Activated CD8-positive, alpha-beta T cell treated with anti-CD3 and anti-CD28 coated beads for 36 hours (primary cell): ENCODE measurements at regions of chr15 and their contacts with region 1.

Region 1: GRCh38 chr15:92077353-92078085 is 224.0 kb downstream of the SLCO3A1 start:
- DNase-seq: peak; percentile 84
- ATAC-seq: peak; percentile 85
- H3K4me3 Mint-ChIP-seq: no peak overlapping the region
- H3K27ac Mint-ChIP-seq: no peak overlapping the region
- H3K4me1 Mint-ChIP-seq: peaks cover 14% of the 10 kb centered on the region
- H3K27me3 Mint-ChIP-seq: no peaks in the 10 kb centered on the region
- CTCF ChIP-seq: peak; percentile 67

Region 2: GRCh38 chr15:91302588-91303439 is 774.7 kb before region 1 on chr15:
- CTCF ChIA-PET with region 1: interaction called, 37 read pairs
- POLR2A ChIA-PET with region 1: no interaction called
- intact Hi-C with region 1: loop called (anchors 5 kb)
- DNase-seq: no peak
- ATAC-seq: peak; percentile 49
- H3K4me3 Mint-ChIP-seq: no peak overlapping the region
- H3K27ac Mint-ChIP-seq: no peak overlapping the region
- H3K4me1 Mint-ChIP-seq: peaks cover 3% of the 10 kb centered on the region
- H3K27me3 Mint-ChIP-seq: peaks cover 10% of the 10 kb centered on the region
- CTCF ChIP-seq: peak; percentile 87

Region 3: DNA sequence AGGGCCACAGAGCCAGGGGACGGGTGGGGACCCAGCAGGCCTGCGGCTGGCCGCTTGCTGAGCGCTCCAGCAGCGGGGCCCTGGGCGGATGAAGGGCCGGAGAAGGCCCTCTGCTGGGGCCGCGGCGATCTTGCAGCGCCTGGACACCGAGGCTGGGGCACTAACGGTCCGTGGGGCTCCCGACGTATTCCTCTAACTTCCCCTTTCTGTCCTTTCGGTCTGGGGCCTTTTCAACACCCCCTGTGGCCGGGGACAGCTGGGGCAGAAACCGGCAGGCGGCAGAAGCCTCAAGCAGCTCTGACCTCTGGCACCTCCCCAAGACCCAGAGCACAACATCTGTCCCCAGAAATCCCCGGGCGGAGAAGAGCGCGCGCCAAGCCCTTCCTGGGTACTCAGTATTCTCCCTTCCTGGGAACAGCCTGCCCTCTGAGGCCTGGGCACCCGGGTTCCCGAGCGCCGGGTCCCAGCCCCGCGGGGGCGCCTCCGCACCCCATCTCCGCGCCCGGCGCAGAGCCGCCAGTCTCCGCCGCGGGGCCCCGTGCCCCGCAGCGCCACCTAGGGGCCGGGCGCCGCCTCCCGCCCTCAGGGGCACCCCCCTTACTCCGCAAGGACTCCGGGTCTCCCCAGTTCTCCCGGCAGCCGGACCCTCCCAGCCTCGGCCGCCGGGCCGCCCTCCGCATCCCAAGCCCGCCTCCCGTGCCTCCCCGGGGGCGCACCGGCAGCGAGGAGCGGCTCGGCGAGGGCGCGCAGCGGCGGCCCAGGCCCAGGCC is 224.6 kb before region 1 on chr15:
- CTCF ChIA-PET with region 1: interaction called, 41 read pairs
- POLR2A ChIA-PET with region 1: interaction called, 3 read pairs
- intact Hi-C with region 1: loop called (anchors 5 kb)
- DNase-seq: peak; percentile 65
- ATAC-seq: peak; percentile 65
- H3K4me3 Mint-ChIP-seq: peak overlapping the region; percentile 75
- H3K27ac Mint-ChIP-seq: peak overlapping the region; percentile 69
- H3K4me1 Mint-ChIP-seq: peaks cover 57% of the 10 kb centered on the region
- H3K27me3 Mint-ChIP-seq: peaks cover 3% of the 10 kb centered on the region
- CTCF ChIP-seq: peak; percentile 82

Region 4: DNA sequence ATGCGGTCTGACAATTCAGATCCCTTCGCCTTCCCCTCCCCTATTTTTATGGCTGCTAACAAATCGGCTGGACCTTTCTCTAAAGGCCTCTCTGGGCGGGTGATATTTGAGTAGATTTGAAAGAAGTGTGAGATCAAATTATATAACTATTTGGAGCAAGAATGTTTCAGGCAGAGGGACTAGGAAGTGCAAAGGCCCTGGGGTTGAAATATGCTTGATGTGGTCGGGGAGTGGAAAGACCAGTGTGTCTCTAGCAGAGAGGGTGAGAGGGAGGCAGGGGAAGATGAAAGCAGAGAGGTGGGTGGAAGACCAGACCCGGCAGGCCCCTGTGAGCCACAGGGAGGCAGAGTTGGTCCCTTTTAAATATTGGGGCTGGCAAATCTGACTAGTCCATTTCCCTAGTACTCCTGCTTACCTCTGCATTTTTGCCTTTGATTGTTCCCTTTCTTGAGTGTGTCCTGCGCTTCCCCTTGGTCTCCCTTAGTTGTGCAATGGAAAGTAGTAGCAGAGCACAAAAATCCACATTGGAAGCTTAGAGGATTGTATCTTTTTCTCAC is 191.7 kb before region 1 on chr15:
- CTCF ChIA-PET with region 1: interaction called, 11 read pairs
- POLR2A ChIA-PET with region 1: no interaction called
- intact Hi-C with region 1: no loop called
- DNase-seq: peak; percentile 46
- ATAC-seq: peak; percentile 69
- H3K4me3 Mint-ChIP-seq: no peak overlapping the region
- H3K27ac Mint-ChIP-seq: no peak overlapping the region
- H3K4me1 Mint-ChIP-seq: peaks cover 14% of the 10 kb centered on the region
- H3K27me3 Mint-ChIP-seq: no peaks in the 10 kb centered on the region
- CTCF ChIP-seq: no peak

Region 5: GRCh38 chr15:92091155-92091734 is 13.7 kb after region 1 on chr15:
- CTCF ChIA-PET with region 1: interaction called, 19 read pairs
- POLR2A ChIA-PET with region 1: interaction called, 7 read pairs
- intact Hi-C with region 1: no loop called
- DNase-seq: peak; percentile 44
- ATAC-seq: no peak
- H3K4me3 Mint-ChIP-seq: no peak overlapping the region
- H3K27ac Mint-ChIP-seq: no peak overlapping the region
- H3K4me1 Mint-ChIP-seq: peaks cover 19% of the 10 kb centered on the region
- H3K27me3 Mint-ChIP-seq: no peaks in the 10 kb centered on the region
- CTCF ChIP-seq: peak; percentile 67

Region 6: DNA sequence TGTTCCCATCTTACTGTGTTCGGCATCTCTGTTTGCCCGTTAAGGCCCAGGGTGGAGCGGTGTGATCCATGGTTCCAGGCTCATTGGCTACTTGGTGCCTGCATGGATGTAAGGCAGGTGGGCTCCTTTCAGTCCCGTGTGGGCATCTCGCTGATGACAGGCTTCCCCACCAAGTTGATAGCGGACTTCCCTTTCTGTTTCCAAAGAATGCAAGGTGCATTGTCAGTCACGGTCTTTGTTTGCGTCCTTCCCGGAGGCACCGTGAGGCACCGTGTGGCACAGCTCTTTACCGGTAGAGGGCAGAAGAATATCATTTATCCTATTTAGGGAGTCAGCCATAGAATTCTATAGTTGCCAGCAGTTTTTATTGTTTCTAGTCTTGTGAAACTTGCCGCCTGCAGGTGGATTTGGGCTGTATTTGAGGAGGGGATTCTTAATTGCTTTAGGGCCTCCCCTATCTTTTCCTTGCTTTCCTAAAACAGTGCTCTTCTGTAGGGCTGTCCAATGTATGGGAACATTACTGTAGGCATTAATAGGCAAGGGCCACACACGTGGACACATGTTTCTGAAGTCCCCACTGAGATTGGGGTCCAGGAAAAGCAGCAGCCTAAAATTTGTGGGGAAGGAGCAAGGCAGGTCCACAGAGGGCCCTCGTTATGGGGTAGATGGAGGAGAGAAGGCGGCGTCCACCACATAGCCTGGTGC is 20.1 kb after region 1 on chr15:
- CTCF ChIA-PET with region 1: interaction called, 10 read pairs
- POLR2A ChIA-PET with region 1: no interaction called
- intact Hi-C with region 1: no loop called
- DNase-seq: peak; percentile 71
- ATAC-seq: peak; percentile 84
- H3K4me3 Mint-ChIP-seq: no peak overlapping the region
- H3K27ac Mint-ChIP-seq: no peak overlapping the region
- H3K4me1 Mint-ChIP-seq: peaks cover 36% of the 10 kb centered on the region
- H3K27me3 Mint-ChIP-seq: no peaks in the 10 kb centered on the region
- CTCF ChIP-seq: peak; percentile 83

Region 7: GRCh38 chr15:92118162-92118935 is 40.8 kb after region 1 on chr15:
- CTCF ChIA-PET with region 1: no interaction called
- POLR2A ChIA-PET with region 1: no interaction called
- intact Hi-C with region 1: no loop called
- DNase-seq: no peak
- ATAC-seq: no peak
- H3K4me3 Mint-ChIP-seq: no peak overlapping the region
- H3K27ac Mint-ChIP-seq: no peak overlapping the region
- H3K4me1 Mint-ChIP-seq: peaks cover 5% of the 10 kb centered on the region
- H3K27me3 Mint-ChIP-seq: no peaks in the 10 kb centered on the region
- CTCF ChIP-seq: no peak